PC-9 (cell line): ENCODE measurements at regions of chr3 and their contacts with region 1.

Region 1: GRCh38 chr3:15629860-15630597 is 28.5 kb downstream of the BTD start:
- DNase-seq: peak; percentile 57 to 60
- H3K4me3 ChIP-seq: peak overlapping the region; percentile 15; the same call in 1 of the 2 replicates
- H3K27ac ChIP-seq: peak overlapping the region; percentile 79
- H3K4me1 ChIP-seq: peaks cover 54% of the 10 kb centered on the region
- H3K27me3 ChIP-seq: no peaks in the 10 kb centered on the region
- CTCF ChIP-seq: peak; percentile 79

Region 2: GRCh38 chr3:15647611-15648167 is 17.7 kb after region 1 on chr3:
- CTCF ChIA-PET with region 1: interaction called, 3 read pairs
- POLR2A ChIA-PET with region 1: interaction called, 14 read pairs
- intact Hi-C with region 1: loop called (anchors 1 kb)
- DNase-seq: peak; percentile 25 to 64
- H3K4me3 ChIP-seq: no peak overlapping the region; the same call in 1 of the 2 replicates
- H3K27ac ChIP-seq: peak overlapping the region; percentile 82
- H3K4me1 ChIP-seq: peaks cover 40% of the 10 kb centered on the region
- H3K27me3 ChIP-seq: no peaks in the 10 kb centered on the region
- CTCF ChIP-seq: no peak

Region 3: GRCh38 chr3:15667484-15667883 is 37.5 kb after region 1 on chr3:
- CTCF ChIA-PET with region 1: interaction called, 4 read pairs
- POLR2A ChIA-PET with region 1: no interaction called
- intact Hi-C with region 1: loop called (anchors 5 kb)
- DNase-seq: no peak
- H3K4me3 ChIP-seq: no peak overlapping the region
- H3K27ac ChIP-seq: no peak overlapping the region
- H3K4me1 ChIP-seq: no peaks in the 10 kb centered on the region
- H3K27me3 ChIP-seq: no peaks in the 10 kb centered on the region
- CTCF ChIP-seq: no peak

Region 4: DNA sequence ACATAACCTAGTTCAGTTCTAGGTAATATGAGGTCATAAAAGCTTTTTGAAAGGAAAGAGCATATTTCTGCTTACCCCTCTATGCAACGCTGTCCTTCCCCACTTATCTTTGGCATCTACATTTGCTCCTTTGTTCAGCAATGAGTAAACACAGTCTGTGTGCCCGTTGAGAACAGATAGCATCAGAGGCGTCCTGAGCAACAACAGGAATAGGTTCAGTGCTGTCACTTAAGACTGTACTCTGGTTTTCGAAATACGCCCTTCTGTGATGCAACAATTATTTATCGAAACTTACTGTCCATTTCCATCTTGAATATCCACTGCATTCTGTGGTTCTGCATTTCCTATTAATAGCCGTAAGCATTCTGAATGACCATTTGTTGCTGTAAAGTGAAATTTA is 55.9 kb after region 1 on chr3:
- CTCF ChIA-PET with region 1: no interaction called
- POLR2A ChIA-PET with region 1: no interaction called
- intact Hi-C with region 1: loop called (anchors 5 kb)
- DNase-seq: no peak
- H3K4me3 ChIP-seq: no peak overlapping the region
- H3K27ac ChIP-seq: no peak overlapping the region
- H3K4me1 ChIP-seq: no peaks in the 10 kb centered on the region
- H3K27me3 ChIP-seq: no peaks in the 10 kb centered on the region
- CTCF ChIP-seq: no peak